Activated T-helper 1 cell treated with anti-CD3 and anti-CD28 coated beads, Interleukin-12 subunit alpha, Interleukin-12 subunit beta, Interleukin-2, Interleukin-4 antibody, amounts not matched to agents 30 ng/mL and 10 ng/mL and 1 ng/mL, durations not matched to agents 14 hours and 24 hours and 36 hours (primary cell): ENCODE measurements at regions of chr19 and their contacts with region 1.

Region 1: DNA sequence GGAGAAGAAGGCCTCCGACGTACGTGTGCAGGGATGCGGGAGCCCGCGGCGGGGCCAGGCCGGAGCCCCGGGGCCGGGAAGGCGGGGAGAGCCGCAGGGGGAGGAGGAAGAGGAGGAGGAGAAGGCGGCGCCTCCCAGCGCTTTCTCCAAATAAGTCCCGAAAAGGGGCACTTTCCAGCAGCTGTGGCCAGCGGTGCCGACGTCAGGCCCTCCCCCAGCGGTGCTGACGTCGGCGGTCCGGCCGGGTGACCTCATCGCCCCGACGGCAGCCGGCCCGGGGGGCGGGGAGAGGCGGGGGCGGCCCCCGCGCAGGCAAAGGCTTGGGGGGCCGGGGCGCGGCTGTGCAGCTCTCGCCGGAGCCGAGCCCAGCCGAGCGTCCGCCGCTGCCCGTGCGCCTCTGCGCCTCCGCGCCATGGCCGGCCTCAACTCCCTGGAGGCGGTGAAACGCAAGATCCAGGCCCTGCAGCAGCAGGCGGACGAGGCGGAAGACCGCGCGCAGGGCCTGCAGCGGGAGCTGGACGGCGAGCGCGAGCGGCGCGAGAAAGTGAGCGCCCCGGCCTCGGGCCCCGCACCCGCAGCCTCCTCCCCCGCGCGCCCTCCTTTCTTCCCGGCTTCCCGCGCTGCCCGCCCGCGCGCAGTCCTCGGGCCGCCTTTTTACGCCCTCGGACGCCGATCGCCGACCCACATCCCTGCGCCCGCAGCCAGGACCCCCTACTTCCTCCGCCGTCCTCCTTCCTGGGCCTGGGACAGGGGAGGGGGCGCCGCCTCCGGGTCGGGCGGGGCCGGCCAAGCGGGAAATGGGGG is at the start of gene TPM4:
- DNase-seq: peak; percentile 88
- H3K4me3 Mint-ChIP-seq: peak within 1 kb of the TSS; percentile 88
- H3K27ac Mint-ChIP-seq: peak within 1 kb of the TSS; percentile 98
- H3K4me1 Mint-ChIP-seq: peaks cover 70% of the 10 kb centered on the region
- H3K27me3 Mint-ChIP-seq: no peaks in the 10 kb centered on the region
- total RNA-seq, gene TPM4: 346 and 351 TPM in 2 replicates

Region 2: DNA sequence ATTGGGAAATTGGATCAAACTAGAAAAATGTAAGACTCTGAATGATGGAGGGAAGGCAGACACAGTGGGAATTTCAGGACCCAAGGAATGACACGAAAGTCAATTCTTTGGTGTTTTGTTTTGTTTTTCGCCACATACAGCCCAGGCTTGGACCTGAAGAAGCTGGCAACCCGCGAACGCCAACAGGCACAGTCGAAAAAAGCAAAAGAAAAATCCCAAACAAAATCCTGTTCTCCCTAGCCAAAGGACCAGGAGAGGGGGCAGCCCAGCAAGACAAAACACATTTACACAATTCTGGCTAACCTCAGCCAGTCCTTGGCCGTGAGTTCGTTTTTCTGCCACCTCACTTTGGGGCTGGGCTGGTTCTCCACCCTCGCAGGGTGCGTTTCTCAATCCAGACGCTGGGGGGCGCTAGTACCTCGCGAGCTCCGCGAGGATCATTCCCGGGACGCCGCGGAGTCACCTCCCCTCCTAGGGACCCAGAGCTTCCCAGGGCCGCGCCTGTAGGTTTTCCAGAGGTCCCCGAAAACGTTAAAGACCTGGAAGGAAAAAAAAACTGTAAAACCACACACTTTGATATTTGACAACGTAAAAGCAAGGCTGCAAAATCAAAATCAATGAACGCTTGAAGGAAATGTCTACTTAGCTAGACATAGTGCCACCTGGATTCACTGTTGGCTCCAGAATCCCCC is 34.9 kb before region 1 on chr19:
- intact Hi-C with region 1: loop called (anchors 2 kb)
- DNase-seq: peak; percentile 64
- H3K4me3 Mint-ChIP-seq: peak overlapping the region; percentile 45
- H3K27ac Mint-ChIP-seq: no peak overlapping the region
- H3K4me1 Mint-ChIP-seq: peaks cover 5% of the 10 kb centered on the region
- H3K27me3 Mint-ChIP-seq: peaks cover 4% of the 10 kb centered on the region

Region 3: DNA sequence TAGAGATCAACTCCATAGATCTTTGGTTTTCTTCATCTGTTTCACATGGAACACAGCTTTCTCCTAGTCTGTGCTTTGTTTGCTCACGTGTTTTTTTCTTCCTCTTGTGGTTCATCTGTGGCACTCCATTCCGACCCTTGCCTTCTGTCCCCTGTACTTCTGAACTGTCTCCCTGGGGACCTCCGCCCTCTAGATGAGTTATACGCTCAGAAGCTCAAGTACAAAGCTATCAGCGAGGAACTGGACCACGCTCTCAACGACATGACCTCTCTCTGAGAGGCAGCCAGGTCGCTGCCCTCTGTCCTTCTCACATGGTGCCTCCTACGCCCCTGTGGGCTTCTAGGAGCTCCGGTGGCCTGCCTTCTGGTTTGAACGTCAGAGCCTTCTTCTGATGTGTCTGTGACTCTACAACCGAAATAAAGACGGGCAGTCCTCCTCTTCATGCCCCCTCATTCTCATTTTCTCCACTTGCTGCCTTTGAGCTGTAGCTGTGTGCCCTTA is 18.8 kb after region 1 on chr19:
- intact Hi-C with region 1: loop called (anchors 1 kb)
- DNase-seq: no peak
- H3K4me3 Mint-ChIP-seq: peak overlapping the region; percentile 29
- H3K27ac Mint-ChIP-seq: peak overlapping the region; percentile 89
- H3K4me1 Mint-ChIP-seq: peaks cover 34% of the 10 kb centered on the region
- H3K27me3 Mint-ChIP-seq: no peaks in the 10 kb centered on the region

Region 4: DNA sequence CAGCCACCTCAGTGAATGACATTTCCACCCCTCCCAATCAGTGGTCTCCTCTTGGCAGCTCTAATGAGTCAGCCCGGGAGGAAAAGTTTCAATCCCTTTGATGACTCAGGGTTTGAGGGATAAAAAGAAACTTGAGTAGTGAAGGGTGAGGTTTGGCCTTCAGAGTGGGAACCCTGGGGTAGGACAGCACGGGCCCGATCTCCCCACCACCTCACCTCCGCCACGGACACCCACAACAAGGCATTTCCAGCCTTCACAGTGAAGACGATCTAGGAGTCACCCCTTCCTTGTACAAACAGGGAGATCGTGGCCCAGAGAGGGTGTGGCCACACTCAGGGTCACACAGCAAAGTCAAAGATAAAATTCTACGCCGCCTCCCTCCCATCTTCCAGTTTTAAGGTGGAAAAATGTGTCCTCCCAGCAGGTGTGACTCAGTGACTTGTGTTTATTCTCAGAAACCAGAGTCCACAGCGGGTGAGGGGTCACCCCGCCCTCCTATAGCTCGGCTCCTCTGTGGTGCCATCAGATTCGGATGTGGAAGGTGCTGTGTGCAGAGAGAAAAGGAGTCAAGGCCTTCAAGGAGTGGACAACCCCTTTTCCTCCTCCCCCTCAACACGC is 84.7 kb after region 1 on chr19:
- intact Hi-C with region 1: loop called (anchors 2 kb)
- DNase-seq: no peak
- H3K4me3 Mint-ChIP-seq: peak overlapping the region; percentile 4
- H3K27ac Mint-ChIP-seq: peak overlapping the region; percentile 68
- H3K4me1 Mint-ChIP-seq: peaks cover 16% of the 10 kb centered on the region
- H3K27me3 Mint-ChIP-seq: peaks cover 2% of the 10 kb centered on the region

Region 5: GRCh38 chr19:16584248-16585141 is 508.1 kb after region 1 on chr19:
- intact Hi-C with region 1: loop called (anchors 5 kb)
- DNase-seq: peak; percentile 88
- H3K4me3 Mint-ChIP-seq: peak overlapping the region; percentile 87
- H3K27ac Mint-ChIP-seq: peak overlapping the region; percentile 90
- H3K4me1 Mint-ChIP-seq: peaks cover 73% of the 10 kb centered on the region
- H3K27me3 Mint-ChIP-seq: no peaks in the 10 kb centered on the region